ENCODE measurements at regions of chr22 and their contacts with region 1.

Region 1: GRCh38 chr22:28247667-28248363 is 328.8 kb upstream of the PITPNB start:
- DNase-seq: no peak
- ATAC-seq: no peak
- H3K4me3 ChIP-seq: no peak overlapping the region
- H3K27ac ChIP-seq: no peak overlapping the region
- H3K4me1 ChIP-seq: no peaks in the 10 kb centered on the region
- H3K27me3 ChIP-seq: no peaks in the 10 kb centered on the region
- CTCF ChIP-seq: no peak

Region 2: DNA sequence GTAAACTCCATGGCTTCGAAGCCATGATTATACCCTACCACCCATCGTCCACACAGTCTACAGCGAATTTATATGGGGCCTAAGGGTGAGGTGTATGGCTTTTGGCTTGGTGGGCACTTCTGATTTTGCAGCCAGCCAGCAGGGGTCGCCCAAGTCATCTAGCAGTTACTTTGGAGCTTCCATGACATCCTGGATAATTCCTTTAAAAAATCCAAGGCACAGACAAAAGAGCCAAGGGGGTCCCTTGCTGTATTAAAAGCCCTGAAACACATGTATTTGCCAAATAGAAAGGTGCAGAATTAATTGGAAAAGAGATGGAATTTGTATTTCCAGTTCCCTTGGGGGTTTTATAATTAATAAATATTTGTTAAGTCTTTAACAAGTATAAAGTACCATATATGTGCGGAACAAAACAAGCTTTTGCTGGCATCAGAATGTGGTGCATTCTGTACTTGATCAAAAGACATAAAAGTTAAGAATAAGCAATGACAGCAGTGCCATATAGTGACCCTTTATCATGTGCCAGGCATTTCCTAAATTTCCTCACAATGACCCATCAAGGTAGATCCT is 195.9 kb before region 1 on chr22:
- CTCF ChIA-PET with region 1: no interaction called
- POLR2A ChIA-PET with region 1: no interaction called
- intact Hi-C with region 1: loop called (anchors 10 kb)
- DNase-seq: peak; percentile 63
- ATAC-seq: peak; percentile 20; the same call in 1 of the 2 replicates
- H3K4me3 ChIP-seq: no peak overlapping the region
- H3K27ac ChIP-seq: no peak overlapping the region
- H3K4me1 ChIP-seq: no peaks in the 10 kb centered on the region
- H3K27me3 ChIP-seq: no peaks in the 10 kb centered on the region
- CTCF ChIP-seq: peak; percentile 80

Region 3: DNA sequence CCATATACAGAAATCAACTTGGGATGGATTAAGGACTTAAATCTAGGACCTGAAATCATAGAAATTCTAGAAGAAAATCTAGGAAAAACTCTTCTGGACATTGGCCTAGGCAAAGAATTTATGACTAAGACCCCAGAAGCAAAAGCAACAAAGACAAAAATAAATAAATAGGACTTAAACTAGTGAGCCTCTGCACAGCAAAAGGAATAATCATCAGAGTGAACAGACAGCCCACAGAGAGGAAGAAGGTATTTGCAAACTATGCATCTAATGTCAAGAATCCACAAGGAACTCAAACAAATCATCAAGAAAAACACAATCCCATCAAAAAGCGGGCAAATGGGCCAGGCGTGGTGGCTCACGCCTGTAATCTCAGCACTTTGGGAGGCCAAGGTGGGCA is 399.4 kb after region 1 on chr22:
- CTCF ChIA-PET with region 1: no interaction called
- POLR2A ChIA-PET with region 1: interaction called, 19 read pairs
- intact Hi-C with region 1: no loop called
- DNase-seq: no peak
- ATAC-seq: no peak
- H3K4me3 ChIP-seq: no peak overlapping the region
- H3K27ac ChIP-seq: no peak overlapping the region
- H3K4me1 ChIP-seq: no peaks in the 10 kb centered on the region
- H3K27me3 ChIP-seq: no peaks in the 10 kb centered on the region
- CTCF ChIP-seq: no peak

Region 4: DNA sequence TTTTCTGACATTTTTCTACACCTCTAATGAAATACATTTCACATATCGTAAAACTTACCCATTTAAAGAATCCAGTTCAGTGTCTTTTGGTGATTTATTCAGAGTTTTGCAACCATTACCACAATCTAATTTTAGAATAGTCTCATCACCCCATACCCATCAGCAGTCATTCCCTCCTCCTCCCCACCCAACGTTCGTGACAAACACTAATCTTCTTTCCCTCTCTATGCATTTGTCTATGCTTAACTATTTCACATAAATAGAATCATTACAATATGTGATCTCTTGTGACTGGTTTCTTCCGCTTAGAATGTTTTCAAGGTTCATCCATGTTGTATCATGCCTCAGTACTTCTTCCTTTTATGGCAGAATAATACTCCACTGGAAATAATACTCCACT is 422.3 kb after region 1 on chr22:
- CTCF ChIA-PET with region 1: no interaction called
- POLR2A ChIA-PET with region 1: no interaction called
- intact Hi-C with region 1: no loop called
- DNase-seq: no peak
- ATAC-seq: no peak
- H3K4me3 ChIP-seq: no peak overlapping the region
- H3K27ac ChIP-seq: no peak overlapping the region
- H3K4me1 ChIP-seq: peaks cover 4% of the 10 kb centered on the region; the same call in 1 of the 2 replicates
- H3K27me3 ChIP-seq: no peaks in the 10 kb centered on the region
- CTCF ChIP-seq: no peak